Posterior cingulate gyrus (tissue), 11 donors: ENCODE measurements at regions of chr3 and their contacts with region 1.

Region 1: GRCh38 chr3:98901392-98902350 is at the start of gene DCBLD2:
- DNase-seq: peak; percentile 97 to 100 (median 99)

Region 2: GRCh38 chr3:98593046-98593936 is 308.4 kb before region 1 on chr3 and contains the start of gene CPOX:
- intact Hi-C with region 1: loop called (anchors 5 kb)
- DNase-seq: peak; percentile 85 to 98 (median 90)

Region 3: DNA sequence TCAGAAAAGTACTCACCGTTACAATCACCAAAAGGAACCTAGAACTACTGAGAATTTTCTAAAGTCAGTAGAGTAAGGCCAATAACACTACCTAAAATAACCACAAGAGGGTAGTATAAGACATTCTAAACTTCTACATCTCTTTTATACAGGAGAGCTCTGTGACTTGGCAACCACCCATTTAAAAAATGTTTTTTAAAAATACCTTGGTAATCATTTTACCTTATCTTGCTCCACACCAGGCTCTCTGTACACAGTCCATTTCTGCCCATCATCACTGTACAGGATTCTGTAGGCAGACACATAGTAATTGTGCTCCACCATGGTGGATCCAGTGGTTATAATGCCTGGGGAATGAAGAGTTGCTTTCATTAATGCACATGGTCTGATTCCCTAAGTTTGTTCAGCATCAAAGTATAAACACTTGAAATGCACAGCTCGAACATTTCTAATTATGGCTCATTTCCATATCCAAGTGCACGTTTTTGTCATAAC is 84.1 kb before region 1 on chr3:
- intact Hi-C with region 1: loop called (anchors 5 kb)
- DNase-seq: no peak

Region 4: DNA sequence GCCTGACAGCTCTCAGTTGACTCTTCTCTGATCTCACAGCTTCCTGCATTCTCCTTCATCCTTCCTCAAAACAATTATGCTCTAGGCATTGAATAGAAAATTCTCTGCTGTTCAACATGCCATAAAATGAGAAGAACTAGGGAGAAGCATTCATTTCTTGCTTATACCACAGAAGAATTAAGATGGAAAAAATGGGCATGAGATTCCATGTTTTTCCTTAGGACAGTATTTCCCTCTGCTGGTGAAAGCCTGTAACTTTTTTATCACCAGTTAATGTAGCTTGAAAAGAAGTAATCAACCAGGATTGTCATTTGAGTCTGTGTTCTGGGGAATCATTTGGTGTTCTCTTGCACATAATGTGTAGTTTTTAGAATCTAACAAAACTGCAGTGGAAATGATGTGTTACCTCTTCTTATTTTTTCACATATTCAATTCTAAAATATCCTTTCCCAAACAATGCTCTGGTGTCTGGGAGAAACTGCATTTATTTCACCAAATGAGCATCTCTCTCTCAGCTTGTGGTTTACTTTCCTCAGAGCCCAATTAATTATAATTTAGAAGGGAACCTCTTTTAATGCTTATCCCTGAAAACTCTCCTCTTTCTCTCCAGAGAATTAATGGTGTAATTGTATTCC is 92.6 kb after region 1 on chr3:
- intact Hi-C with region 1: loop called (anchors 5 kb)
- DNase-seq: no peak